HEK293T (cell line): ENCODE measurements at regions of chr14 and their contacts with region 1.

Region 1: GRCh38 chr14:44961604-44962333 is at the starts of genes KLHL28 and TOGARAM1:
- DNase-seq: peak; percentile 91

Region 2: GRCh38 chr14:44981198-44981597 is 19.4 kb after region 1 on chr14:
- CTCF ChIA-PET with region 1: no interaction called
- POLR2A ChIA-PET with region 1: interaction called, 11 read pairs
- DNase-seq: no peak

Region 3: GRCh38 chr14:45083971-45084722 is 122.4 kb after region 1 on chr14 and contains the start of gene PRPF39:
- CTCF ChIA-PET with region 1: no interaction called
- POLR2A ChIA-PET with region 1: interaction called, 21 read pairs
- DNase-seq: peak; percentile 98